Transverse colon (tissue), 4 donors: ENCODE measurements at regions of chr3 and their contacts with region 1.

Region 1: GRCh38 chr3:158976966-158977365 is 175.1 kb downstream of the MFSD1 start:
- DNase-seq: no peak
- H3K4me3 ChIP-seq: no peak overlapping the region
- H3K27ac ChIP-seq: no peak overlapping the region
- H3K4me1 ChIP-seq: no peaks in the 10 kb centered on the region
- H3K27me3 ChIP-seq: no peaks in the 10 kb centered on the region
- CTCF ChIP-seq: no peak
- EP300 ChIP-seq: no peak
- POLR2A ChIP-seq: no peak

Region 2: DNA sequence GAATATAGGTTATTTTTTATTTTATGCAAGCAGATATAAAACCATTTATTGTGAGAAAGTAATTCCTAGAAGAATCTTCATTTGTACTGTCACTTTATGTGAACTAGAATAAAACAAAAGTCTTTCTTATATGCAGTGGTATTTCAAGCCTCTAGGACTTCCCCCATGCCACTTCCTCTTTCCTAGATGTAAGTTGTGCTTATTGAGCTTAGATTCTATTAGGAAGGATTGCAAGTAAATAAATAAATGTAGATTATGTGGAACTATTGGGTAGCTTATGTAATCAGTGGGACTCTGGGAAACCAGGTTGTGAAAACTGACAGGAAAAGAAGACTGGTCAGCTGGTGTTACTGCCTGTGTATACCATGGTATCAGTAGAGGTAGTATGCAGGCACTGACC is 697.4 kb before region 1 on chr3:
- in situ Hi-C with region 1: loop called in 1 of 4 experiments (anchors 10 kb)
- intact Hi-C with region 1: no loop called
- DNase-seq: no peak
- H3K4me3 ChIP-seq: no peak overlapping the region
- H3K27ac ChIP-seq: no peak overlapping the region
- H3K4me1 ChIP-seq: no peaks in the 10 kb centered on the region
- H3K27me3 ChIP-seq: no peaks in the 10 kb centered on the region
- CTCF ChIP-seq: no peak
- EP300 ChIP-seq: no peak
- POLR2A ChIP-seq: no peak